ENCODE measurements at regions of chr1 and their contacts with region 1.

Region 1: DNA sequence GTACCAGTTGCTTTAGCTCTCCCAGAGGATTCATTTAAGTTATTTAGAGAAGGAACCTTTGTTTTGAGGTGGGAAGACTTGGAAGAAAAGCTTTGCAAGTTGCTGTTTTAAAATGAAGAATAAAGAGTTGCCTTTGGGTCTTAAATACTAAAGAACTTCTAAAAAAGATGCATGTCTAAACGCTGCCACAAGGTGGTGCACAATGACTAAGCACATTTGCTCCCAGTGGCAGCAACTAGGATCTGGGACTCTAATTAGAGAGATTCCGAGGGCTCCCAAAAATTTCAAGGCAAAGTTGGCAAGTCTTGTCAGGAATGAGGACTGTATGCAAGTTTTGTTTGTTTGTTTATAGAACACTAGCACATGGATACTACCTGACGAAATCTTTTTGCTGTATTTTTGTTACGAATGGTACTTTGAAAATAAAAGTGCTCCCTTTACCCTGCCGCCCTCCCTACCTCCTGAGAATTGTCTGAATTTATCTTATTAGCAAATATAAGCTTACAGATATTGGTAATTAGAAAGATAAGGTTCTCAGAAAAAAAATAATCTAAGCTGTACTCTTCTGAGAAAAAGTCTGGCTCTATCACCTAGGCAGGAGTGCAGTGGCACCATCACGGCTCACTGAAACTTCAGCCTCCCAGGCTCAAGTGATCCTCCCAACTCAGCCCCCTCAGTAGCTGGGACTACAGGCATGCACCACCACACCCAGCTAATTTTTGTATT is 121.8 kb downstream of the HFM1 start:
- DNase-seq: peak; percentile 79

Region 2: GRCh38 chr1:91404151-91405012 is 121.5 kb after region 1 on chr1 and contains the start of gene HFM1:
- intact Hi-C with region 1: loop called in 1 of 2 experiments (anchors 10 kb)
- DNase-seq: peak; percentile 90
- total RNA-seq, gene HFM1: 2.1 TPM